ENCODE measurements at regions of chr11 and their contacts with region 1.

Region 1: DNA sequence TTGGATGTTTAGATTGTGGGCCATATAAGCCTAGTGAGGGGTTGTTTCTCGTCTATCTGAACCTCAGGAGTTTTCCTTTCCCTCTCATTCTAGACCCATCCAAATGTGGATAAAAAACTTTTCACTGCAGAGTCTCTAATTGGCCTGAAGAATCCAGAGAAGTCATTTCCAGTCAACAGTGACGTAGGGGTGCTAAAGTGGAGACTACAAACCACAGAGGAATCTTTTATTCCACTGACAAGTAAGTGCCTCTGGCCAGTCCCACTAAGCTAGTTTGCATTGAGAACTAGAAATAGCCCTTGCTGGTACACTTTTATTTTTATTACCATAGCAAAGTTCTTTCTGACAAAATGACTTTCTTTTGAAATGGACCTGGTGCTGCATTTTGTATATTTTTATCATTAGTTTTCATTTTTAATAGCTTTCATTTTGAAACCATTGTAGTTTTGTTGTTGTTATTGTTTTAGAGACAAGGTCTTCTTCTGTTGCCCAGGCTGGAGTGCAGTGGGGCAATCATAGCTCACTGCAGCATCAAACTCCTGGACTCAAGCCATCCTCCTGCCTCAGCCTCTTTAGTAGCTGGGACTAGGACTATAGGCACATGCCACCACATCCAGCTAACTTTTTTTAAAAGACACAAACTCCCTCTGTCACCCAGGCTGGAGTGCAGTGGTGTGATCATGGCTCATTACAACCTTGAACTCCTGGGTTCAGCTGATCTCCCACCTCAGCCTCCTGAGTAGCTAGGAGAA is 14.6 kb upstream of the PHLDB1 start:
- DNase-seq: no peak
- H3K4me3 Mint-ChIP-seq: no peak overlapping the region
- H3K27ac Mint-ChIP-seq: no peak overlapping the region
- H3K4me1 Mint-ChIP-seq: peaks cover 12% of the 10 kb centered on the region
- H3K27me3 Mint-ChIP-seq: no peaks in the 10 kb centered on the region

Region 2: DNA sequence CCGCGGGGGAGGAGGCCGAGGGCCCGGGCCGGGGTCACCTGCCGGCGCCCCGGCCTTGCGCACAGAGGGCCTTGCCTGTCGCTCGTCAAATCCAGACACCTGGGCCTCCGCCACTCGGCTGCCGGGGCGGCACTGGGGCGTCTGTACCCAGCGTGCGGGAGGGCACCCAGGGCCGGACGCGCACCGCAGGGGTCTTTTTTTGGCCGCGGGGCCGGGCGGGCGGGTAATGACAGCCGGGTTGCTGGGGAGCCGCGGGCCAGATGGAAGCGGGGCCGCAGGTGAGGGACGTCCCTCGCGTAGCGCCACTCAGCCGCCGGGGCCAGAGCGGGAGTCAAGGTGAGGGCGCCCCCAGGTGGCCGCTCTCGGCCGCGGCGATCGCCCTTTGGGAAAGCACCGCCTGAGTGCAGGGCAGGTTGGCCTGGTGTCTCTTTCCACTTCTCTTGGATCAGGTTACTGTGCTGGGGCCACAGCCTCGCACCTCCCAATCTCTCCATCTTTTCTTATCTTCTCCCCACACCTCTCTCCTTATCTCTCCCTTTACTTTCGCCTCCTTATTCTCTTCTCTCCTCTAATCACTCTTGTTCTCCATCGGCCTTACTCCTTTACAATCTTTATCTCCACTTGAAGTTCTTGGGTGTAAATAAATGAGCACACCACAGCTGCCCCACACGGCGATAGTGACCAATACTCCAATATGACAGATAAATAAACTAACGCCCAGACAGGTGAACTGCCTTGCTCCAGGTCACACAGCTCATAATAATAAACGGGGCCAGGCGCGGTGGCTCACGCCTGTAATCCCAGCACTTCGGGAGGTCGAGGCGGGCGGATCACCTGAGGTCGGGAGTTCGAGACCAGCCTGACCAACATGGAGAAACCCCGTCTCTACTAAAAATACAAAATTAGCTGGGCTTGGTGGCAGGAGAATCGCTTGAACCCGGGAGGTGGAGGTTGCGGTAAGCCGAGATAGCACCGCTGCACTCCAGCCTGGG is 18.3 kb after region 1 on chr11:
- intact Hi-C with region 1: loop called (anchors 1 kb)
- DNase-seq: peak; percentile 72
- H3K4me3 Mint-ChIP-seq: peak overlapping the region; percentile 57
- H3K27ac Mint-ChIP-seq: no peak overlapping the region
- H3K4me1 Mint-ChIP-seq: peaks cover 18% of the 10 kb centered on the region
- H3K27me3 Mint-ChIP-seq: peaks cover 29% of the 10 kb centered on the region

Region 3: GRCh38 chr11:118659314-118659952 is 66.6 kb after region 1 on chr11:
- intact Hi-C with region 1: loop called (anchors 1 kb)
- DNase-seq: peak; percentile 78
- H3K4me3 Mint-ChIP-seq: no peak overlapping the region
- H3K27ac Mint-ChIP-seq: no peak overlapping the region
- H3K4me1 Mint-ChIP-seq: peaks cover 3% of the 10 kb centered on the region
- H3K27me3 Mint-ChIP-seq: peaks cover 2% of the 10 kb centered on the region

Measured in activated T-helper 2 cell treated with anti-CD3 and anti-CD28 coated beads, Interferon-gamma antibody, Interleukin-2, Interleukin-4, amounts not matched to agents 10 μg/mL and 5 μg/mL and 100 μg/mL, durations not matched to agents 14 hours and 24 hours and 36 hours (primary cell).